ENCODE measurements at regions of chr11 and their contacts with region 1.

Region 1: GRCh38 chr11:57345555-57346211 is 7.5 kb downstream of the P2RX3 start:
- DNase-seq: peak; percentile 89
- ATAC-seq: peak; percentile 70
- H3K4me3 Mint-ChIP-seq: peak overlapping the region; percentile 24; the same call in 1 of the 2 replicates
- H3K27ac Mint-ChIP-seq: no peak overlapping the region
- H3K4me1 Mint-ChIP-seq: peaks cover 29% of the 10 kb centered on the region
- H3K27me3 Mint-ChIP-seq: peaks cover 16% of the 10 kb centered on the region
- CTCF ChIP-seq: peak; percentile 89

Region 2: GRCh38 chr11:57324886-57325734 is 20.6 kb before region 1 on chr11 and contains the start of gene TNKS1BP1:
- CTCF ChIA-PET with region 1: interaction called, 11 read pairs
- POLR2A ChIA-PET with region 1: no interaction called
- DNase-seq: peak; percentile 97
- ATAC-seq: peak; percentile 86
- H3K4me3 Mint-ChIP-seq: peak within 1 kb of the TSS; percentile 88
- H3K27ac Mint-ChIP-seq: peak within 1 kb of the TSS; percentile 100
- H3K4me1 Mint-ChIP-seq: peaks cover 49% of the 10 kb centered on the region
- H3K27me3 Mint-ChIP-seq: no peaks in the 10 kb centered on the region
- CTCF ChIP-seq: no peak
- total RNA-seq, gene TNKS1BP1: 109 to 127 TPM (median 125 TPM) in 3 replicates

Region 3: GRCh38 chr11:57364851-57365660 is 19.4 kb after region 1 on chr11:
- CTCF ChIA-PET with region 1: interaction called, 21 read pairs
- POLR2A ChIA-PET with region 1: no interaction called
- DNase-seq: peak; percentile 48
- ATAC-seq: peak; percentile 94
- H3K4me3 Mint-ChIP-seq: no peak overlapping the region; the same call in 1 of the 2 replicates
- H3K27ac Mint-ChIP-seq: no peak overlapping the region
- H3K4me1 Mint-ChIP-seq: peaks cover 24% of the 10 kb centered on the region
- H3K27me3 Mint-ChIP-seq: peaks cover 9% of the 10 kb centered on the region; the same call in 1 of the 2 replicates
- CTCF ChIP-seq: no peak

Region 4: DNA sequence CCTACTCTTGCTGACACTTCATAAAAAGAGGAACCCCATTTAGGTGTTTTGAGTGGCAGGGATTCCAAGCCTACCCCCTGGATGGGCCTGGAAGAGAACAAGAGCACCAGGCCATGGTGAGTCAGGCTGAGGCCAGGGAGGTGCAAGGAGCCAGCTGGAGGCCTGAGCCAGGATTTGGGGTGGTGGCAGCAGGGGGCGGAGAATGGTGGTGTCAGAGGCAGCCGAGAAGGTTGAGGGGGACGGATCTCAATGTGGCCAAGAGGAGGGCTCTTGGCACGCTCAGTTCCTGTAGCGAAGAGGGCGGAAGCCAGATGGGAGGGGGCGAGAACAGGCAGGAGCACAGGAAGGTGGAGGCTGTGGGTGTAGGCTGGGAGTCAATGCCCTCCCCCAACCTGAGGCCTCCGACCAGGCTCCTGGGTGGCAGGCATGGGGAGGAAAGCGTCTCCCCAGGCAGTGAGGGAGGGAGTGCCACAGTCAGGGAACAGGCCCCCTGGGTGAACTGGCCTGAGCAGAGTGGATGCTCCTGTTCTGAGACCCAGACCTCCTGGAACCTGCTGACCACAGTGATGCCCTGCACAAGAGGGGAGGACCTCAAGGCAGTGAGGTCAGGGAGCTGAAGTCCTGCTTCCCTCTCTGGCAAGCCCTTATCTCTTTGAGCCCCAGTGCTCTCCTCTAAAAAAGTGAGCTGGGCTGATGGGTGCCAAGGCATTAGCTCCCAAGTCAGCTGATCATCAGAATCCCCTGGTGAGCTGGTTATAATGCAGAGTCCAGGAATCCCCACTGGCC is 128.5 kb after region 1 on chr11:
- CTCF ChIA-PET with region 1: interaction called, 11 read pairs
- POLR2A ChIA-PET with region 1: no interaction called
- DNase-seq: no peak
- ATAC-seq: peak; percentile 29
- H3K4me3 Mint-ChIP-seq: no peak overlapping the region
- H3K27ac Mint-ChIP-seq: no peak overlapping the region
- H3K4me1 Mint-ChIP-seq: peaks cover 45% of the 10 kb centered on the region
- H3K27me3 Mint-ChIP-seq: peaks cover 46% of the 10 kb centered on the region
- CTCF ChIP-seq: no peak

Region 5: DNA sequence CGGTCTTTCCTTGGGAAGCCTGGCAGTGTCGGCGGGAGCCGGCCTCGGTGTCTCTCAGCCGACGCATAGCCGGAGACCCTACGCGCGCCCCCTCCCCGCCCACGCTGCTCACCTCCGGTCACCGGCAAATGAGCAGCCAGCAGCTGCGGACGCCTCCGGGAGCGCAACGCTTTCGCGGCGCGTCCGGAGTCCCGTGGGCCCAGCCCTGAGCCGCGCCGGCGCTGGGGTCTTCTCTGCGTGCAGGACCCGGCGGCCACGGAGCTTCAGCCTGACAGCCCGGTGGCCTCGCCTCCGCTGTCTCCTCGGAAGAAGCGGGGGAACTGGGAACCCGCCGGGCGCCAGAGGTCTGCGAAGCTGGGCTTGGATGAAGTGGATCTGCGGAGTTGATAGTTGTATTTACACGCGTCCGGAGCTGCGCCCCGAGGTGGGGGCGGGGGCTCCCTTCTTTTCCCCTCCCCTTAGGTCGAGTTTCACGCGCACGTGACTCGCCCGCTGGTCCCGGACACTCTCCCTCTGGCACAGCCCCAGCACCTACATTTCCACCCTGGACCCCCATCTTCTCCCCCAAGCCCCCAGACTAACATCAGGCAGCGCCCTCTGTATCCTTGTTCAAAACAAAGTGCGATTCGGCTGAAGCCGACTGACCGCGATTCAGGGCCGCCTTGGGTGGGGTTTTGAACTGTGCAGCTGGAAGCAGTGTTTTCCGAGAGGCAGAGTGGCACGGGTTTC is 169.8 kb after region 1 on chr11 and contains the start of gene SLC43A1:
- CTCF ChIA-PET with region 1: interaction called, 10 read pairs
- POLR2A ChIA-PET with region 1: no interaction called
- DNase-seq: peak; percentile 54
- ATAC-seq: peak; percentile 29
- H3K4me3 Mint-ChIP-seq: peak within 1 kb of the TSS; percentile 93
- H3K27ac Mint-ChIP-seq: no peak within 1 kb of the TSS
- H3K4me1 Mint-ChIP-seq: peaks cover 20% of the 10 kb centered on the region
- H3K27me3 Mint-ChIP-seq: peaks cover 22% of the 10 kb centered on the region
- CTCF ChIP-seq: no peak
- total RNA-seq, gene SLC43A1: 20.5 to 27.1 TPM (median 21.5 TPM) in 3 replicates

Region 6: DNA sequence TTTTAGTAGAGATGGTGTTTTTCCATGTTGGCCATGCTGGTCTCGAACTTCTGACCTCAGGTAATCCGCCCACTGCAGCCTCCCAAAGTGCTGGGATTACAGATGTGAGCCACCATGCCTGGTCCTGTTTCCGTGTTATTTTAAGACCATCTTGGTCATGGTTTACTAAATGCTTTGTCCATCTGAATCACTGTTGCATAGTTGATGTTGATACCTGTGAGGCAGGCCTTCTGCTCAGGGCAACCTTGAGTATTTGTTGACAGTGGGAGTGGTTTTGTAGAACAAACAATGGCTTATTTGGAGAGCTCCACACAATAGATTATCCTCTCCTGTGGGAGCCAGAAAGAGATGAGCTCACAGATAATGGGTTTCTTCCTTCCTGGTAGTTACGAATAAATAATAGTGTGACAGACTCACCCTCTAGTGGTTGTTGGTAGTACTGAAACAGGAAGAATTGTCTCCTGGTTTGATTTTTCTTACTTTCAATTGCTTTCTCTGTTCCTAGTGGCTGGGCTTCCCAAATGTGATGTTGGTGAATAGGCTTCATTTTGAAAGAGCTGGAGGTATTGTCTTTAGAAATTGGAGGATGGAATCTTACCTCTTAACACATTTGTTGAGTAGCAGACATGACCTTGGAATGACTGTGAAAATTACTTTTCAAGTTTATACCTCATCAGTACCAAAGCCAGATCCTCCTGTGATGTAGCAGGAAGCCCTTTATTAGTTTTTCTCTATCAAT is 454.9 kb after region 1 on chr11:
- CTCF ChIA-PET with region 1: interaction called, 15 read pairs
- POLR2A ChIA-PET with region 1: no interaction called
- DNase-seq: no peak
- ATAC-seq: peak; percentile 93
- H3K4me3 Mint-ChIP-seq: no peak overlapping the region
- H3K27ac Mint-ChIP-seq: peak overlapping the region; percentile 97
- H3K4me1 Mint-ChIP-seq: peaks cover 18% of the 10 kb centered on the region
- H3K27me3 Mint-ChIP-seq: no peaks in the 10 kb centered on the region
- CTCF ChIP-seq: peak; percentile 51

Measured in WTC11 (cell line).